AG04449 (cell line): ENCODE measurements at regions of chr9 and their contacts with region 1.

Region 1: GRCh38 chr9:70924895-70925547 is 196.4 kb downstream of the TRPM3 start:
- DNase-seq: peak; percentile 65
- H3K4me3 ChIP-seq: peak overlapping the region; percentile 43
- CTCF ChIP-seq: peak; percentile 69

Region 2: DNA sequence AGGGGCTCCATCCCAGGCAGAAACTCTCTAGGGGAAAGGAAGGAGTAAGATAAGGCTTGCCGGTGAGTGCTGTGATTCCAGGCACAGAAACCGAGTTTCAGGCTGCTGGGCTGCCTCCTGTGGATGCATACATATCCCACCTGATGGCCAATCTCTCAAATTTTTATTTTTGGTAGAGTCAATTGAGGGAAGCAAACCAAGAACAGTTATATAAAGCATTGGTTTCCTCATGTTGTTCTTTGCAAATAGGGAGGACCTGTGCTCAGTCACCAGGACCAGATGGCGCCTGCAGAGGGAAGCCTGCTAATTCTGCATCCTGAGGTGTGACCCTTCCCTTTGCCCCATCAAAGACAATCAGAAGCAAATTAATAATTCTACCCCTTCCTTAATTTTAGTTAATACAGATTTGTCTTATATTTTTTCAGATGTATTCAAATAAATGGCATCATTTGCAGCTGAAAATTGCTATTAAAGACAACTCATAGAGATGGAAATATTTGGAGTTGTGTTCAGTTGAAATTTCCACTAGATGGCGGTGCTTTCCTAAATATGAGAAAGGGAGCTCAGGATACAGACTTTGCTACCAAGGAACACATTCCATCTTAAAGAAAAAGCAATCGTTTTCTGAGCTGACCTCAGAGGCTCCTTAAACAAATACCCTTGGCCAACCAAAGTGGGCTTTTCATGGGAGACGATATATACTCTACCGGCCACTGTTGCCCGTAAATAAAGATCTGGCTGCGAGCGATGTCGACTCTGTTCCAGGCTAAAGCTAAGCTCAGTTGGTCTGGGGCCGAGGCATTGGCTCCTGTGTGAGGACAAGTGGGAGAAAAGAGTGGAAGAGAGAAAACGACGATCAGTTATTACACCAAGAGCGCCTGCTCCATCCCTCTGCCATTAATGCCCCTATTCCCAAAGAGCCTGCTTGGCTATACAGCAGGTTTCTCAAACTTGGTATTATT is 284.9 kb before region 1 on chr9:
- CTCF ChIA-PET with region 1: interaction called, 20 read pairs
- POLR2A ChIA-PET with region 1: interaction called, 5 read pairs
- DNase-seq: peak; percentile 29
- H3K4me3 ChIP-seq: no peak overlapping the region
- CTCF ChIP-seq: peak; percentile 34

Region 3: GRCh38 chr9:70935856-70936255 is 10.8 kb after region 1 on chr9:
- CTCF ChIA-PET with region 1: interaction called, 20 read pairs
- POLR2A ChIA-PET with region 1: no interaction called
- DNase-seq: peak; percentile 55
- H3K4me3 ChIP-seq: no peak overlapping the region
- CTCF ChIP-seq: no peak

Region 4: DNA sequence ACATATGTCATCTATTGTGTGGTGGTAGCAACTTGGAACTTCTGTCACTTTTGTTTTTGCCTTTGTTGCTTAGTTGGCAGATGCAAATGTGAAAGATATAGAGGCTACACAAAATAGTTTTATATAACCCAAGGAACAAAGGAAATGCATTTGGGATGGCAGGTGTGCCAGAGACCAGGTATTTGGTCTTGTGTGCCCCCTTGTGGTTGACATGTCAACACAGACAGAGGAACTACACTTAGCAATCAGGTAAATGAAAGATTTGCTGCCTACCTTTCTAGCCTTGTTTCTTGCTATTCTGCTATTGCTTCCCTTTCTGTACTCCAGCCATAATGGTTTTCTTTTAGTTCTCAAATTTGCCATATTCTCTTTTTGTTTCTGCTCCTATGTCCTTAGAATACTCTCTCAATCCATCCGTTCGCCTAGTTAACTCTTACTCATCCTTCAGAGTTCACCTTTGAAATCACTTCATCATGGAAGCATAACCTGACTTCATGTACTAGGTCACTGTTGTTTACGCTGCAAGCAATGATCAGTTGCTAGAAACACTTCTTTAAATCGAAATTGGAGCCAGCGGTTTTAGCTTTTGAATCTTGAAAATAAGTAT is 76.9 kb after region 1 on chr9:
- CTCF ChIA-PET with region 1: interaction called, 80 read pairs
- POLR2A ChIA-PET with region 1: interaction called, 3 read pairs
- DNase-seq: no peak
- H3K4me3 ChIP-seq: no peak overlapping the region
- CTCF ChIP-seq: peak; percentile 39

Region 5: GRCh38 chr9:71128796-71129195 is 203.8 kb after region 1 on chr9:
- CTCF ChIA-PET with region 1: no interaction called
- POLR2A ChIA-PET with region 1: no interaction called
- DNase-seq: no peak
- H3K4me3 ChIP-seq: no peak overlapping the region
- CTCF ChIP-seq: no peak

Region 6: GRCh38 chr9:71249729-71250317 is 324.8 kb after region 1 on chr9:
- CTCF ChIA-PET with region 1: interaction called, 95 read pairs
- POLR2A ChIA-PET with region 1: interaction called, 3 read pairs
- DNase-seq: peak; percentile 33
- H3K4me3 ChIP-seq: no peak overlapping the region
- CTCF ChIP-seq: peak; percentile 70

Region 7: DNA sequence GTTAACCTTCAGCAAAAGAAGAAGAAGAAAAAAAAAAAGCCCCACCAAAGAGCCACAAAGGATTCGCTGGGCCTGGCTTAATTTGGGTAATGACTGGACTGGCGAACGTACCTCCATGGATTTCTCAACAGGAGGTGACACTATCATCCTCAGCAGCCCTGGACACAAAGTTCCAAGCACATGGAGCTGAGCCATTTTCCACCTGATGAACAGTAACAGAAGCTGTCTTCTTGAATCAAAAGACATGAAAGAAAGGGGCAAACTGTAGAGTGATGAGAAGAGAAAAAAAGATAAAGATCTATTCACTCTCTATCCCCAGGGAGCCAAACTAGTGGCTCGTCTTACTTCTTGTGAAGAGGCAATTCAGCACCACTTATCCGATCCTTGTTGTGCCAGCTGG is 346.6 kb after region 1 on chr9:
- CTCF ChIA-PET with region 1: no interaction called
- POLR2A ChIA-PET with region 1: no interaction called
- DNase-seq: no peak
- H3K4me3 ChIP-seq: no peak overlapping the region
- CTCF ChIP-seq: no peak